ENCODE measurements at regions of chr20 and their contacts with region 1.

Region 1: GRCh38 chr20:62470459-62470858 is 5.3 kb downstream of the GATA5 start:
- DNase-seq: no peak
- ATAC-seq: no peak
- H3K4me3 ChIP-seq: no peak overlapping the region
- H3K27ac ChIP-seq: peak overlapping the region; percentile 24
- H3K4me1 ChIP-seq: peaks cover 30% of the 10 kb centered on the region
- H3K27me3 ChIP-seq: no peaks in the 10 kb centered on the region
- CTCF ChIP-seq: no peak

Region 2: DNA sequence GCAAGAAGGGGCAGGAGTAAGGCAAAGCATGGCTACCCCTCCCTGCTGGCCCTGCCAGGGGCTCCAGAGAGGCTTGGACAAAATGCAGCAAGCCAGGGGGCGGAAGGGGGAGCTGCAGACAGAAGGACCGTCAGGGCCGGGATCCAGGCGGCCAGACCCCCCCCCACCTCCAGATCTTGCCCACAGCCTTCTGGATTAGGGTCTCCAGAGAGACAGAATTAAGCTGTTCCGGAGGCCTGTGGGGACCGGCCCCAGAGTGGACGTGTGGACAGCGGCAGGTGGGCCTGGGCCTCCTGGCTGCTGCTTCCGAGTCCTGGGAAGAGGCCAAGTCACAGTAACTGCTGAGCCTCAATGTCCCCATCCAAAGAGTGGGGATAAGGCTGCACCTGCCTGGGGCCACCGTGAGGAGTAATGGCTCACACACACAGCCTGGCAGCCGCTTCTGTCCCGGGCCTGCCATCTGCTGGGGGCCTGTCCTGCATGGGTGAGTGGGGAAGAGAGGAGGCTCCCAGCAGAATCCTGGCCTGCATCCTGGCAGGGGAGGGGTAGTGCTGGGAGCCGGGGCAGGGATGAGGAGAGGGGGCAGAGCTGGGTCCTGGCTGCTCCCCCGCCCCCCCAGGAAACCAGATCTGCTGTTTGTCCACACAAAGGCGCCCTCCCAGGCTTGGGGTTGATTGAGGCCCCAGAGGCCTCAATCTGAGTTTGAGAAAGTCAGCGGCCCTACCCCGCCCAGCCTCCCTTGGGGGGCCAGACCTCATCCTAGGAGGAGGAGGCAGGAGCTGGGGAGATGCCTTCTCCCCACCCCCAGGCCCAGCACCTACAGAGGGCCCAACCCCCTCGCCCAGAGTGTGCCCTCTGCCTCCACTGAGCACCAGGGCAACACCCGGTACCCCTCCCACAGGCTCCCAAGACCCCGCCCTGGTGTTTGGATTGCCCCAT is 107.2 kb before region 1 on chr20:
- CTCF ChIA-PET with region 1: interaction called, 5 read pairs
- POLR2A ChIA-PET with region 1: interaction called, 12 read pairs
- in situ Hi-C with region 1: no loop called
- intact Hi-C with region 1: no loop called
- DNase-seq: no peak
- ATAC-seq: no peak
- H3K4me3 ChIP-seq: peak overlapping the region; percentile 89 to 96
- H3K27ac ChIP-seq: peak overlapping the region; percentile 88
- H3K4me1 ChIP-seq: peaks cover 70% of the 10 kb centered on the region
- H3K27me3 ChIP-seq: no peaks in the 10 kb centered on the region
- CTCF ChIP-seq: no peak; the same call in 1 of the 2 replicates